Activated T-helper 1 cell treated with anti-CD3 and anti-CD28 coated beads, Interleukin-12 subunit alpha, Interleukin-12 subunit beta, Interleukin-2, Interleukin-4 antibody, amounts not matched to agents 30 ng/mL and 10 ng/mL and 1 ng/mL, durations not matched to agents 14 hours and 24 hours and 36 hours (primary cell): ENCODE measurements at regions of chr1 and their contacts with region 1.

Region 1: DNA sequence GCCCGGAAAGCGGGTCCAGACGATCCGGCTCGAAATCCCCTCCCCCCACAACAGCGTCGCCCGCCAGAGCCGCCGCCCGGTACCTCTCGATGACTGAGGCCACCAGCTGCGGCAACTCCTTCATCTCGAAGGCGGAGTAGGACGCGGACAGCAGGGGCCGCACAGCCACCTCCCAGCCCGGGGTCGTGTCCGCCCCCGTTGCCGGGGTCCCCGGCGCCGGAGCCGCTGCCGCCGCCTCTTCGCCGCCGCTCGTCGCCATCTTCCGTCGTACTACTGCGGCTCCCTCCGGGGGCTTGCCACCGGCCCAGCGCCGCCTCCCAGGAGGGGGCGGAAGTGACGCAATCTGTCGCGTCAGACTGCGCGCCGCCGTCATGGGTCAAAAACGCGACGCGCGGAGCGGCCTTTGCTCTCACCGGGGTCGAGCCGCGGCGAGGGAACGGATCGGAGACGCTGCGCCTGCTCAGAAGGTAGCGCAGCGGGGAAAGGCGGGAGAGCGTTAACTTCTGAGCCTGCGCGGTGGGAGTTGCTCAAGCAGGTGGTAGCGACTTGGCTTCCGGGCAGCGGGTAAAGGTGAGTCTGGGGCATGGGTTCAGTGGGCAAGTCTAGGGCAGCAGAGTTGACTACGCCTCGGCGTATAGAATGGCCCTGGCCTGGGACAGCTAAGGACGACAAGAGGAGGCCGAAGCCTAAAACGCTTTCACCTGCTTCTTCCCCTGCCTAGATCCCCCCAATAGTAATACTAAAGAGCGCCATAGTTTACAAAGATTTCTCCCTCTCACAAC is at the start of gene UBR4:
- DNase-seq: peak; percentile 97
- H3K4me3 Mint-ChIP-seq: peak within 1 kb of the TSS; percentile 94
- H3K27ac Mint-ChIP-seq: peak within 1 kb of the TSS; percentile 98
- H3K4me1 Mint-ChIP-seq: peaks cover 63% of the 10 kb centered on the region
- H3K27me3 Mint-ChIP-seq: no peaks in the 10 kb centered on the region
- total RNA-seq, gene UBR4: 155 and 161 TPM in 2 replicates

Region 2: DNA sequence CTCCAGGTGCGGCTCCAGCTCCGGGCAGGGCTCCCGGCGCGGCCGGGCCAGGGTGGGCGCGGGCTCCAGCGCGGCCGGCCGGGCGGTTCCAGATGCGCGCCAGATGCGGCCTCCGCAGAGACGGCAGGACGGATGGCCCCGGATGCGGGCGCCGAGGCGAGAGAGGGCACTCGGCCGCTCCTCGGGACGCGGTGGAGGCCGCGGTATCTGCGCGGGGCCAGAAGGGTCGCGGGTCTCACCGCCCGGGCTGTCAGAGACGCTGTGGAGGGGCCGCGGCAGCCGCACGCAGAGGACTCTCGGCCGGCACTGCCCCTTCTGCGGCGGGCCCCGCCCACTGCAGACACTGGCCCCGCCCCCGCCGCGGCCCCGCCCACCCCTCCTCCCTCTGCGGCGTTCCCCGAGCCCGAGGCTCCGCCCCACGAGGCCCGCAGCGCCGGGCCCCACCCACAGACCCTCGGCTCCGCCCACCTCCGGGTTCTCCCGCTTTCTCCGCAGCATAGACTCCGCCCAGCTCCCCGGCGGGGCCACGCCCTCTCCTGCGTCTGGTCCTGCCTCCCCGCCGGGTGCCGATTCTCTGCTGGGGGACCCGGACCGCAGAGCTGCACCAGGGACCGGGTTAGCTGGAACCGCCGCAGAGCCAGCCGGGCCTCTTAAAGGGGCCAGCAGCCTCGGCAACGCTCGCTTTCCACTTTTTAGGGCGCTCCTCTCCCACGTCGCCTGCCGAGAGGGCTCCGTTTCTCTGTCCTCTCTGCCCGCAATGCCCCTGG is 253.6 kb before region 1 on chr1 and contains the start of gene IFFO2:
- intact Hi-C with region 1: loop called (anchors 2 kb)
- DNase-seq: peak; percentile 97
- H3K4me3 Mint-ChIP-seq: peak within 1 kb of the TSS; percentile 89
- H3K27ac Mint-ChIP-seq: peak within 1 kb of the TSS; percentile 78
- H3K4me1 Mint-ChIP-seq: peaks cover 50% of the 10 kb centered on the region
- H3K27me3 Mint-ChIP-seq: peaks cover 26% of the 10 kb centered on the region
- total RNA-seq, gene IFFO2: 31.8 and 32.6 TPM in 2 replicates

Region 3: GRCh38 chr1:19169642-19170041 is 40.5 kb before region 1 on chr1:
- intact Hi-C with region 1: loop called (anchors 5 kb)
- DNase-seq: no peak
- H3K4me3 Mint-ChIP-seq: no peak overlapping the region
- H3K27ac Mint-ChIP-seq: peak overlapping the region; percentile 61
- H3K4me1 Mint-ChIP-seq: peaks cover 16% of the 10 kb centered on the region
- H3K27me3 Mint-ChIP-seq: no peaks in the 10 kb centered on the region

Region 4: GRCh38 chr1:19179597-19180264 is 30.4 kb before region 1 on chr1:
- intact Hi-C with region 1: loop called (anchors 1 kb)
- DNase-seq: no peak
- H3K4me3 Mint-ChIP-seq: no peak overlapping the region
- H3K27ac Mint-ChIP-seq: peak overlapping the region; percentile 88
- H3K4me1 Mint-ChIP-seq: peaks cover 24% of the 10 kb centered on the region
- H3K27me3 Mint-ChIP-seq: no peaks in the 10 kb centered on the region

Region 5: GRCh38 chr1:19186001-19186400 is 24.2 kb before region 1 on chr1:
- intact Hi-C with region 1: loop called (anchors 1 kb)
- DNase-seq: no peak
- H3K4me3 Mint-ChIP-seq: peak overlapping the region; percentile 46
- H3K27ac Mint-ChIP-seq: peak overlapping the region; percentile 89
- H3K4me1 Mint-ChIP-seq: peaks cover 18% of the 10 kb centered on the region
- H3K27me3 Mint-ChIP-seq: no peaks in the 10 kb centered on the region

Region 6: DNA sequence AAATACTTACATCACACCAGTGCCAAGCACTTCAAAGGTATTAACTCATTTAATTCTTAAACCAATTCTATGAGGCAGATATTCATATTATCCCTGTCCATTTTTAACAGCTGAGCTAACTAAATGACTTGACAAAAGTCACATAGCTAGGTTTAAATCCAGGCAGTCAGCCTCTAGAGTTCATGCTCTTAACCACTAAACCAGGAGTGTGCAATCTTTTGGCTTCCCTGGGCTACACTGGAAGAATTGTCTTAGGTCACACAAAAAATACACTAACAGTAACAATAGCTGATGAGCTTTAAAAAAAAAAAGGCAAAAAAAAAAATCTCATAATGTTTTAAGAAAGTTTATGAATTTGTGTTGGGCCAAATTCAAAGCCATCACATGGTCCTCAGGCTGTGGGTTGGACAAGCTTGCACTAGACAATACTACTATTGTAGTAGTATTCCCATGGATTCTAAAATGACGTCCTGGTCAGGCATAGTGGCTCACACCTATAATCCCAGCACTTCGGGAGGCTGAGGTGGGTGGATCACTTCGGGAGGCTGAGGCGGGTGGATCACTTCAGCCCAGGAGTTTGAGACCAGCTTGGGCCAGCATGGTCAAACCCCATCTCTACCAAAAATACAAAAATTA is 10.1 kb before region 1 on chr1:
- intact Hi-C with region 1: no loop called
- DNase-seq: no peak
- H3K4me3 Mint-ChIP-seq: no peak overlapping the region
- H3K27ac Mint-ChIP-seq: no peak overlapping the region
- H3K4me1 Mint-ChIP-seq: peaks cover 22% of the 10 kb centered on the region
- H3K27me3 Mint-ChIP-seq: no peaks in the 10 kb centered on the region

Region 7: DNA sequence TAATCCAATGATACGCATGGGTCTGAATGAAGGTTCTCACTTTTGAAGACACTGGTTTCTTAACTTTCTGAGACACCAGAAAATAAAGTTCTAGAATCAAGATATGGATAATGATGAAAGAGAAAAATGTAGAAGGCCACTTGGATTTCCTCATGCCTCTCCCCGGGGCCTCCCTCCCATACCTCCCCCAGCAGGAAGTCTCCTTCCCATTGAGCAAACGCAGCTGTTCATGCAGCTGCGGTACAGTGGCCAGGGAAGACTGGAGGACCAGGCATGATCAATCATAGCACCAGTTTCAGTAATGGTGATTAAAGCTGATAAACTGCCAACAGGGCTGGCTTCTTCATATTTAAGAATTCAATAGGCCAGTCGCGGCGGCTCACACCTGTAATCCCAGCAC is 10.8 kb after region 1 on chr1:
- intact Hi-C with region 1: no loop called
- DNase-seq: no peak
- H3K4me3 Mint-ChIP-seq: no peak overlapping the region
- H3K27ac Mint-ChIP-seq: no peak overlapping the region
- H3K4me1 Mint-ChIP-seq: peaks cover 15% of the 10 kb centered on the region
- H3K27me3 Mint-ChIP-seq: no peaks in the 10 kb centered on the region

Region 8: GRCh38 chr1:19251305-19252196 is 41.4 kb after region 1 on chr1 and contains the starts of genes EMC1 and MRTO4:
- intact Hi-C with region 1: loop called (anchors 1 kb)
- DNase-seq: peak; percentile 87
- H3K4me3 Mint-ChIP-seq: peak within 1 kb of the TSS; percentile 99
- H3K27ac Mint-ChIP-seq: peak within 1 kb of the TSS; percentile 98
- H3K4me1 Mint-ChIP-seq: peaks cover 22% of the 10 kb centered on the region
- H3K27me3 Mint-ChIP-seq: no peaks in the 10 kb centered on the region
- total RNA-seq, gene EMC1: 63.9 and 78.3 TPM in 2 replicates
- total RNA-seq, gene MRTO4: 134 and 137 TPM in 2 replicates

Region 9: GRCh38 chr1:19300211-19300610 is 90.0 kb after region 1 on chr1:
- intact Hi-C with region 1: no loop called
- DNase-seq: no peak
- H3K4me3 Mint-ChIP-seq: no peak overlapping the region
- H3K27ac Mint-ChIP-seq: no peak overlapping the region
- H3K4me1 Mint-ChIP-seq: no peaks in the 10 kb centered on the region
- H3K27me3 Mint-ChIP-seq: no peaks in the 10 kb centered on the region

Region 10: DNA sequence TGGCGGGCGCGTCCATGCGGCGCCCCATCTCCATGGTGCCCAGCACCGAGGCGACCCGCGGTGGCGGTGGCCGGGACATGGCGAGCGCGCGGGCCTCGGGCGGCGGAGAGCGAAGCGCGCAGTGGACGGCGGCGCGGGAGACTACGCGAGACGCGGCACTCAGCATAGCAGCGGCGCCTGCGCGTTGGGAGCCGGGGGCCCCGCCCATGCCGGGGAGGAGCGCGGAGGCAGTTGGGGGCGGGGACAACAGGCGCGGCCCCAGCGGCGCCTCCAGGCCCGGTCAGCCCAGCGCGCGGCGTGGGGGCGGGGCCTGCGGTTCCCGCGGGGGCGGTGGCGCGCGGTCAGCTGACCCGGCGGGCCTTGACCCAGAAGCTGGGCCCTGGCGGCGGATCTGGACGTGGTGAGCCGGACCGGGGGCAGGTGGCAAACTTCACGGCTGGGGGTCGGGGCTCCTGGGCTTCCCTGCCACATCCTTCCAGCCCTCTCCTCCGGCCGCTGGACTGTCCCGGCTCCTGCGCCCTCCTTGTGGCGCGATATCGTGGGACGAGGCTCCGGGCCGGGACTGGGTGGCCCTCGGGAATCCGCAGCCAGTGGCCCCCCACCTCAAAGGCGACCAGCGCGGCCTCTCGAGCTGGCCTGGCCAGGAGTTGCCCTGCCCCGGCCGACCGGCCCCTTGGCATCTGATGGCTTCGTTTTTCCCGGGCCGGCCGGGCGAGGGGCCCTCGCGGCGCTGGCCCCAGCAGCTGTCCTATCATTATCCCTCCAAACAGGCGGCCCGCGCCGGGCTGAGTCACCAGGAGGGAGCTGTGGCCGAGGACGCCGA is 102.0 kb after region 1 on chr1 and contains the starts of genes AKR7A2 and SLC66A1:
- intact Hi-C with region 1: loop called (anchors 2 kb)
- DNase-seq: peak; percentile 93
- H3K4me3 Mint-ChIP-seq: peak within 1 kb of the TSS; percentile 91
- H3K27ac Mint-ChIP-seq: peak within 1 kb of the TSS; percentile 87
- H3K4me1 Mint-ChIP-seq: peaks cover 30% of the 10 kb centered on the region
- H3K27me3 Mint-ChIP-seq: no peaks in the 10 kb centered on the region
- total RNA-seq, gene AKR7A2: 30.0 and 31.1 TPM in 2 replicates
- total RNA-seq, gene SLC66A1: 9.9 and 12.0 TPM in 2 replicates

Region 11: GRCh38 chr1:19616489-19616888 is 406.3 kb after region 1 on chr1:
- intact Hi-C with region 1: no loop called
- DNase-seq: no peak
- H3K4me3 Mint-ChIP-seq: no peak overlapping the region
- H3K27ac Mint-ChIP-seq: no peak overlapping the region
- H3K4me1 Mint-ChIP-seq: peaks cover 16% of the 10 kb centered on the region
- H3K27me3 Mint-ChIP-seq: no peaks in the 10 kb centered on the region